PC-9 (cell line): ENCODE measurements at regions of chr14 and their contacts with region 1.

Region 1: GRCh38 chr14:40394634-40395352 is 962.6 kb upstream of the FBXO33 start:
- DNase-seq: no peak
- H3K4me3 ChIP-seq: no peak overlapping the region
- H3K27ac ChIP-seq: no peak overlapping the region
- H3K4me1 ChIP-seq: no peaks in the 10 kb centered on the region
- H3K27me3 ChIP-seq: no peaks in the 10 kb centered on the region
- CTCF ChIP-seq: no peak

Region 2: GRCh38 chr14:40347675-40348074 is 47.1 kb before region 1 on chr14:
- CTCF ChIA-PET with region 1: no interaction called
- POLR2A ChIA-PET with region 1: no interaction called
- intact Hi-C with region 1: no loop called
- DNase-seq: no peak
- H3K4me3 ChIP-seq: no peak overlapping the region
- H3K27ac ChIP-seq: no peak overlapping the region
- H3K4me1 ChIP-seq: no peaks in the 10 kb centered on the region
- H3K27me3 ChIP-seq: no peaks in the 10 kb centered on the region
- CTCF ChIP-seq: no peak

Region 3: GRCh38 chr14:41167040-41167439 is 772.2 kb after region 1 on chr14:
- CTCF ChIA-PET with region 1: interaction called, 19 read pairs
- POLR2A ChIA-PET with region 1: no interaction called
- intact Hi-C with region 1: no loop called
- DNase-seq: no peak
- H3K4me3 ChIP-seq: no peak overlapping the region
- H3K27ac ChIP-seq: no peak overlapping the region
- H3K4me1 ChIP-seq: no peaks in the 10 kb centered on the region
- H3K27me3 ChIP-seq: no peaks in the 10 kb centered on the region
- CTCF ChIP-seq: no peak